CD8-positive, alpha-beta T cell (primary cell): ENCODE measurements at regions of chr3 and their contacts with region 1.

Region 1: DNA sequence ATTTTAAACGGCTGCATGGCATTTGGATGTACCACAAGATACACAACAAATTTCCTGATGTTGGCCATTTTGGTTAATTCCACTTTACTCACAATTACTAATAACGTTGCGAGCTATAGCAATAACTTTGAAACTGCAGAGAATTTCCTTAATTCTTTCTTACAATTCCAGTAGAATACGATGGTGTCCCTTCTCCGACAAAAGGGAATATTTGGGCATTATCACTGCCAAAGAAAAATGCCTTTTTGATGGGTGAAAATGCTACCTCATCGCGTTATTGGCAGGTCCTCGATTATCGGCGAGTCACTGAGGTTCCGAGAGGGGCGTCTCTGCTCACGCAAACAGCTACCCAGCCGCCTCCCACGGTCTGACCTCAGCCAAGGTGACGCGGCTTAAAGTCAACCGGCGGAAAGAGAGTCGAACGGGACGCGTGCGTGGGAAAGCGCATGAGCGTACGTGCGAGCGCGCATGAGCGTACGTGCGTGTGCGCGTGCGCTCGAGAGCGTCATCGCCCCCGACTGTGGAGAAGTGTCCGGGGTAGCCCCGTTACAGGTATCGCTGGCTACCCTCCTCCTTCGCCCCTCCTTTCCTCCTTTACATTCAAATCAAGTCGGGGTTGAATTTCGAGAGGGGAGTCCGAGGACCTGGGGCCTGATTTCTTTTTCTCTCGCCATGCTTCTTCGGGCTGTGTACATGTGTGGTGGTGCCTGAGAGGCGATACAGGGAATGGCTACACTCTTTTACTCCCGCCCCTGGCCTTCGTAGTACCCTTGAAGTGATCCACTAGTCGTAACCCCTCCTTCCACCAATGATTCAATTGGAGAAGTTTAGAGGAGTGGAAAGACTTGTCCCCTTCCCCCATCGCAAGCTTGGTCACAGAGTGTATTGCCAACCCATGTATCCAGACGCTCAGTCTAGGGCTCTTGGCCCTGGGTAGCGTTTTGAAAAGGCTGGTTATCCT is at the start of gene OXSM:
- DNase-seq: peak; percentile 75 to 98 (median 89)
- ATAC-seq: peak; percentile 93
- H3K4me3 ChIP-seq: peak within 1 kb of the TSS; percentile 64 to 65
- H3K4me3 Mint-ChIP-seq: peak within 1 kb of the TSS; percentile 97
- H3K27ac ChIP-seq: peak within 1 kb of the TSS; percentile 85 to 87
- H3K27ac Mint-ChIP-seq: peak within 1 kb of the TSS; percentile 98
- H3K4me1 ChIP-seq: peaks cover 18% of the 10 kb centered on the region
- H3K4me1 Mint-ChIP-seq: peaks cover 54% of the 10 kb centered on the region
- H3K27me3 ChIP-seq: no peaks in the 10 kb centered on the region
- H3K27me3 Mint-ChIP-seq: no peaks in the 10 kb centered on the region
- CTCF ChIP-seq: no peak
- total RNA-seq, gene OXSM: 4.0 to 5.9 TPM

Region 2: DNA sequence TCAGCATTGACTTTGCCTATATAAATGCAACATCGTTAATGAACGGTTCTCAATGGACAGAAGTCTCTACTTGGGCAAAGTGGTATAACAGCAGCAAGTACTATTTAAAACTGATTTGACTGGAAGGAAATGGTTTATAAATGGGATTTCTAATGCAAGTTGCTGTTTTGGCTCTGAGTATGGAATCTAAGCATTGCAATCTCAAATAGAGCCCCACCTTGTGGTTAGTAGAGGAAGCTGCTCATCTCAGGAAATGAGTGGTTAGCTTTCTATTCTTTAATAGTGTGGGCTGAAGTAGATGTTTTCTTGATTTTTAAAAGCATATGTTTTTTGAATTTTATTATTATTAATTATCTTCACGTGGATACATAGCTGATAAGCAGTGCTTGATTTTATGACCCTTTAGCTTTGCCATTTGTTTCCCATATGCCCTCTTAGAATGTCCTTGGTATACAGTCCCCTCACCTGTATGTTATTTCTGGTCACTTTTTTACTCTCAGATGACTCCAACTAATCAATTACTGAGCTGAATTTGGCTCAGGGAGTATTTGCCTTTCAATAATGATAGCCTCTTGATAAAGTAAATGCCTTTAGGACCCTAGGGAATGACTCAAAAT is 67.1 kb after region 1 on chr3:
- CTCF ChIA-PET with region 1: interaction called, 3 read pairs
- POLR2A ChIA-PET with region 1: interaction called, 4 read pairs
- intact Hi-C with region 1: loop called (anchors 2 to 5 kb)
- DNase-seq: peak in 3 of 9 experiments; percentile 10 to 66 (median 54)
- ATAC-seq: peak; percentile 84
- H3K4me3 ChIP-seq: no peak overlapping the region
- H3K4me3 Mint-ChIP-seq: no peak overlapping the region
- H3K27ac ChIP-seq: no peak overlapping the region
- H3K27ac Mint-ChIP-seq: no peak overlapping the region
- H3K4me1 ChIP-seq: no peaks in the 10 kb centered on the region
- H3K4me1 Mint-ChIP-seq: no peaks in the 10 kb centered on the region
- H3K27me3 ChIP-seq: no peaks in the 10 kb centered on the region
- H3K27me3 Mint-ChIP-seq: no peaks in the 10 kb centered on the region
- CTCF ChIP-seq: peak; percentile 67